IMR-90 (cell line): ENCODE measurements at regions of chr16 and their contacts with region 1.

Region 1: DNA sequence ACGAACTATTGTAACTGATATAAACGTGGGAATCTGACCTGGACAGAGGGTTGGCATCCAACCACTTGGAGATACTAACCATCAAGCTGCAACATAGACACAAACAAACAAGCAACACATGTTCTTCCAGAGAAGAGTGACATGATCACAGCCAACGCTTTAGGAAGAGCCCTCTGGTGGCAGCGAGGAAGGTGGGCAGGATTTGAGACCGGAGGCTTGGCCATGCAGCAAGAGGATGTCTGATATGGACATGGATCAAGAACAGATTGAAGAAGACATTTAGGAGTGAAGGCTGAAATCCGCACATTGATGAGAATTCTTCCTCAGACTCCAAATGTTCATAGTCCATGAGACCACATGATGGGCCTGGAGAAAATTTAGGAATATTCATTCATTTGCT is 40.3 kb upstream of the TNRC6A start:
- DNase-seq: peak; percentile 48
- ATAC-seq: peak; percentile 45; the same call in 1 of the 2 replicates
- H3K4me3 ChIP-seq: no peak overlapping the region
- H3K27ac ChIP-seq: no peak overlapping the region
- H3K4me1 ChIP-seq: peaks cover 13% of the 10 kb centered on the region
- H3K27me3 ChIP-seq: no peaks in the 10 kb centered on the region
- CTCF ChIP-seq: peak; percentile 51
- POLR2A ChIP-seq: no peak
- RAD21 ChIP-seq: peak; percentile 55

Region 2: GRCh38 chr16:24700549-24701392 is 11.6 kb after region 1 on chr16:
- CTCF ChIA-PET with region 1: no interaction called
- POLR2A ChIA-PET with region 1: no interaction called
- dilution Hi-C with region 1: no loop called
- in situ Hi-C with region 1: no loop called
- intact Hi-C with region 1: loop called (anchors 2 kb)
- DNase-seq: peak; percentile 98
- ATAC-seq: peak; percentile 97
- H3K4me3 ChIP-seq: no peak overlapping the region
- H3K27ac ChIP-seq: peak overlapping the region; percentile 92
- H3K4me1 ChIP-seq: peaks cover 10% of the 10 kb centered on the region
- H3K27me3 ChIP-seq: no peaks in the 10 kb centered on the region
- CTCF ChIP-seq: peak; percentile 51
- POLR2A ChIP-seq: no peak
- RAD21 ChIP-seq: peak; percentile 54